ENCODE measurements at regions of chr15 and their contacts with region 1.

Region 1: DNA sequence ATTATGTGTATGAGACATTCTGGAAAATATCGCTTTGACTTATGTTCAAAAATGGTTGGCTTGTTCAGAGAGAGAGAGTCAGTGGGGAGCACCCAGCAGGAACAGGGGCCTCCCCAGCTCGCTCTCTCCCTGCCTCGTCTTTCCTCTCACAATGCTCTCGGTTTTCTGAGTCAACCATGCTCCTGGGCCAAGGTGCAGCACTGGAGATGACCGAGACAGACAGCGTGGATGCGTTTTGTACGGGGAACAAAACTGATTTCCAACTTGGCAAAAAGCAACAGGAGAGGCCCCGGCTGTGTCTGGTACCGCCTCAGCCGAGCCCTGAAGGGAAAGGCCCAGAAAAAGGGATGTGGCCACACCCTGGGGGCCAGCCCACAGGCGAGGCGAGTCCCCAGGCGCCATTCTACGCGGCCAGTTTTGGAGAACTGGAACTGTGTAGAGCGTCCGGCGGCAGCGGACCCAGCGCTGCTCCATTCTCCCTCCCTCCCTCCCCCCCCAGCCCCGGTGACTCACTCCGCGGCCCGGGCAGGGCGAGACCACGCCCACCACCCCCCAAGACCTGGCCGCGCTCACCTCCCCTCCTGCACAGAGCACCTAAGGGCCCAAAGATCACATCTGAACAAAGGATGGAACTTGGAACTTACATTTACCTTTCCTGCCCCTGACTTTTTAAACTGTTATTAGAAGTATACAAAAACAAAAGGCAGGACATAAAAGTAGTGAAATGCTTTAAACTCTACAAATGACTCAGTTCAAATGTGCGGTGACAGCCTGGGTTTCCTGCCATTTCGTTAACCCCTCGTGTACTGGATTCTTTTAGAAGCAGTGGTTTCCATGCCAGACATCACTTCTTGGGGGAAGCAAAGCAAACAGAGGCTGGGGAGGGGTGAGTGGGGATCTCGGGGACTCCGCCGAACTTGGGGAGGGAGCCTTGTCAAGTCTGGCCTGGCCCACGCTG is 12.7 kb downstream of the ATP10A start:
- DNase-seq: peak; percentile 70 to 84
- ATAC-seq: peak; percentile 69 to 80 (median 76)
- H3K4me3 ChIP-seq: peak overlapping the region; percentile 51
- H3K4me3 Mint-ChIP-seq: peak overlapping the region; percentile 97
- H3K27ac ChIP-seq: peak overlapping the region; percentile 94
- H3K27ac Mint-ChIP-seq: peak overlapping the region; percentile 93 to 96
- H3K4me1 ChIP-seq: peaks cover 54% of the 10 kb centered on the region
- H3K4me1 Mint-ChIP-seq: peaks cover 80 to 85% of the 10 kb centered on the region in 2 donors
- H3K27me3 ChIP-seq: no peaks in the 10 kb centered on the region
- H3K27me3 Mint-ChIP-seq: no peaks in the 10 kb centered on the region
- CTCF ChIP-seq: no peak

Region 2: GRCh38 chr15:25793354-25794050 is 56.9 kb before region 1 on chr15:
- intact Hi-C with region 1: loop called (anchors 2 kb)
- DNase-seq: peak in 1 of 2 donors; percentile 15
- ATAC-seq: peak in 1 of 3 donors; percentile 15
- H3K4me3 ChIP-seq: no peak overlapping the region
- H3K4me3 Mint-ChIP-seq: peak overlapping the region; percentile 11
- H3K27ac ChIP-seq: no peak overlapping the region
- H3K27ac Mint-ChIP-seq: peak overlapping the region in 1 of 2 donors; percentile 47
- H3K4me1 ChIP-seq: peaks cover 38% of the 10 kb centered on the region
- H3K4me1 Mint-ChIP-seq: peaks cover 80 to 91% of the 10 kb centered on the region in 2 donors
- H3K27me3 ChIP-seq: no peaks in the 10 kb centered on the region
- H3K27me3 Mint-ChIP-seq: no peaks in the 10 kb centered on the region
- CTCF ChIP-seq: no peak

Region 3: DNA sequence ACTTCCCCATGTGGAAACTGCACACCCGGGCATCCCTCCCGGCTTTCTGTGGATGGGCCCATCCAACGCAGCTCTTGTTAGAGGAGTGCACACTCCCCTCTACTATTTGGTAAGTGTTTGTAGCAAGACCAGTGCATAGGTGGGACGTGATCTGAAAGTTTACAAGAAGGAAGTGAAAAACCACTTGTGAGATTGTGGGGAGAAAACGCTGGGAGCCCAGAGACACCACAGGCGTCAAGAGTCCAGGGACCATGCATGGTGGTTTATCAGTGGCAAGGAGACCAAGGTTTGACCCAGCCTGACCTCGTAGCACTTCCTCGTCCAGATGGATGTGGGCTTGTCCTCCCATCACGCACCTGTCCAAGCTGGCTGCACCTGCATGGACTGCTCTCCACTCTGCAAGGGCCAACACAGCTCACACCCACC is 38.9 kb before region 1 on chr15:
- intact Hi-C with region 1: loop called (anchors 5 kb)
- DNase-seq: peak; percentile 37 to 52
- ATAC-seq: peak; percentile 71 to 88 (median 75)
- H3K4me3 ChIP-seq: no peak overlapping the region
- H3K4me3 Mint-ChIP-seq: peak overlapping the region; percentile 89
- H3K27ac ChIP-seq: no peak overlapping the region
- H3K27ac Mint-ChIP-seq: peak overlapping the region; percentile 65 to 89
- H3K4me1 ChIP-seq: peaks cover 29% of the 10 kb centered on the region
- H3K4me1 Mint-ChIP-seq: peaks cover 61 to 70% of the 10 kb centered on the region in 2 donors
- H3K27me3 ChIP-seq: no peaks in the 10 kb centered on the region
- H3K27me3 Mint-ChIP-seq: no peaks in the 10 kb centered on the region
- CTCF ChIP-seq: no peak

Measured in natural killer cell (primary cell).